ENCODE measurements at regions of chr1 and their contacts with region 1.

Region 1: DNA sequence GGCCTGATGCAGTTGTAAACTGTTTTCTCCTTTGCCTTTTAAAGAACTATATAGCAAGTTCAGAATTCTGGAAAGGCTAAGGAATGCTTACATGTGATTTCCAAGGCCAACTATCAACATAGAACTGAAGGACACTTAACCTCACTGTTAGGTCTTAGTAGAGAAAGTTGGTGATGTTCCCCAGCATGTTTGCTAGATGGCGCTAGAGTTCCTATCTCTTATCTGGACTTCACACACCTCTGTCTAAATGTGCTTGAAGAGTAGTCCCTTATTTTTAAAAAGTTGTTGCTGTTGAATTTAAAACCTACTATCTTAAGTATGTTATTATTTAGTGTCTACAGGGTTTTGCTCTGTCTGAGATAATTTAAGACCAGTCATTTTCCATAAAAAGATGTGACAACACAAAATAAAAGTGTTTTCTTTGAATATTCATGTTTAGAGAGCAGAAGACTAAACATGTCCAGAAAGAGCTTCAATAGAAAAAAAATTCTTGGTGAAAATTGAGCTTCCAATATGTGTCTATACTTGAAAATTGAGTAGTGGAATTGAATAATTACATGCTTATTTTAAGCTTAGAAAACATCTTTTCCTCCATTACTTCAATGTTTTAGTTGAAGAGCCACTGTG is 237.3 kb downstream of the S1PR1 start:
- DNase-seq: no peak
- H3K4me3 ChIP-seq: no peak overlapping the region
- H3K27ac ChIP-seq: no peak overlapping the region
- H3K4me1 ChIP-seq: no peaks in the 10 kb centered on the region
- H3K27me3 ChIP-seq: no peaks in the 10 kb centered on the region
- CTCF ChIP-seq: peak in 2 of 3 experiments; percentile 51 to 85; a peak in 3 of 4 replicates
- EP300 ChIP-seq: no peak
- POLR2A ChIP-seq: no peak
- RAD21 ChIP-seq: peak; percentile 50 to 57

Region 2: GRCh38 chr1:101394041-101394440 is 80.1 kb before region 1 on chr1:
- CTCF ChIA-PET with region 1: no interaction called
- POLR2A ChIA-PET with region 1: no interaction called
- DNase-seq: no peak
- H3K4me3 ChIP-seq: no peak overlapping the region
- H3K27ac ChIP-seq: no peak overlapping the region
- H3K4me1 ChIP-seq: no peaks in the 10 kb centered on the region
- H3K27me3 ChIP-seq: no peaks in the 10 kb centered on the region; a peak in 2 of 7 replicates
- CTCF ChIP-seq: no peak
- EP300 ChIP-seq: no peak
- POLR2A ChIP-seq: no peak
- RAD21 ChIP-seq: no peak

Region 3: GRCh38 chr1:101453844-101454243 is 20.3 kb before region 1 on chr1:
- CTCF ChIA-PET with region 1: interaction called, 16 read pairs
- POLR2A ChIA-PET with region 1: no interaction called
- DNase-seq: no peak
- H3K4me3 ChIP-seq: no peak overlapping the region
- H3K27ac ChIP-seq: no peak overlapping the region
- H3K4me1 ChIP-seq: no peaks in the 10 kb centered on the region
- H3K27me3 ChIP-seq: no peaks in the 10 kb centered on the region
- CTCF ChIP-seq: no peak
- EP300 ChIP-seq: no peak
- POLR2A ChIP-seq: no peak
- RAD21 ChIP-seq: no peak

Region 4: DNA sequence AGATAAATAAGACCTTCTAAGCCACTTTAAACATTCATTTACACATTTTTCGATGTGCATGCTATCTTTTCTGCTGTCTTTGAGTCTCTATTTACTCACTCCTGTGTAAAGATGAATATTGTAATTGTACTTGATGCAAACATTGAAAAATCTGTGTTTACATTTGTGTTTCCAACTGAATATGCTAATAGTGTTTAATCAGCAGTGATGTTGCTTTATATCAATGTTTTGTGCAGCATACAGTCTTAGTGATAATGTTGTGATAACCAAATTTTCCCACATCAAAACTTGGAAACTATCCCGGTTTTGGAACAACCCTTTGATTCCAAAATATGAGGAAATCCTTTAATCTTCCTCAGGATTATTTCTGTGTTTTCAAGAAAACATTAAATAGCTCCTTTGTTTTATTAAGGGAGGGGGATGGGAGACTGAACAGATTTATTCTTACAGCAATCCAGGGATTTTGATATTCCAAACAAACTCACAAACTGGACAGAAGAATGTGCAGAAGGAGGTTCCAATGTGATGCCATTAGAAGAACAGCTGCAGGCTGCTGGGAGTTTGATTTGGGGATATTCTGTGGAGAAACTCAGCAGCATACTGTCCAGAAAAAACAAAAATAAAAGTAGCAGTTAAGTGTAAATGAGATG is 10.7 kb after region 1 on chr1:
- CTCF ChIA-PET with region 1: interaction called, 34 read pairs
- POLR2A ChIA-PET with region 1: no interaction called
- DNase-seq: no peak
- H3K4me3 ChIP-seq: no peak overlapping the region
- H3K27ac ChIP-seq: no peak overlapping the region
- H3K4me1 ChIP-seq: peaks cover 0 to 7% (median 0%) of the 10 kb centered on the region in 4 experiments; a peak in 2 of 7 replicates
- H3K27me3 ChIP-seq: no peaks in the 10 kb centered on the region
- CTCF ChIP-seq: no peak
- EP300 ChIP-seq: no peak
- POLR2A ChIP-seq: no peak
- RAD21 ChIP-seq: no peak

Region 5: GRCh38 chr1:101506541-101507164 is 32.5 kb after region 1 on chr1:
- CTCF ChIA-PET with region 1: interaction called, 19 read pairs
- POLR2A ChIA-PET with region 1: no interaction called
- DNase-seq: peak in 1 of 2 experiments; percentile 48
- H3K4me3 ChIP-seq: no peak overlapping the region
- H3K27ac ChIP-seq: no peak overlapping the region
- H3K4me1 ChIP-seq: no peaks in the 10 kb centered on the region
- H3K27me3 ChIP-seq: no peaks in the 10 kb centered on the region
- CTCF ChIP-seq: peak in 2 of 3 experiments; percentile 39 to 73; a peak in 3 of 4 replicates
- EP300 ChIP-seq: no peak
- POLR2A ChIP-seq: no peak
- RAD21 ChIP-seq: peak; percentile 47 to 50

Region 6: GRCh38 chr1:101520302-101520701 is 46.1 kb after region 1 on chr1:
- CTCF ChIA-PET with region 1: interaction called, 13 read pairs
- POLR2A ChIA-PET with region 1: no interaction called
- DNase-seq: peak; percentile 15 to 45
- H3K4me3 ChIP-seq: no peak overlapping the region
- H3K27ac ChIP-seq: no peak overlapping the region
- H3K4me1 ChIP-seq: no peaks in the 10 kb centered on the region
- H3K27me3 ChIP-seq: peaks cover 0 to 1% (median 0%) of the 10 kb centered on the region in 4 experiments; a peak in 1 of 7 replicates
- CTCF ChIP-seq: peak in 2 of 3 experiments; percentile 67 to 82; a peak in 3 of 4 replicates
- EP300 ChIP-seq: no peak
- POLR2A ChIP-seq: no peak
- RAD21 ChIP-seq: peak; percentile 90 to 91

Region 7: GRCh38 chr1:101532377-101532776 is 58.2 kb after region 1 on chr1:
- CTCF ChIA-PET with region 1: no interaction called
- POLR2A ChIA-PET with region 1: no interaction called
- DNase-seq: no peak
- H3K4me3 ChIP-seq: no peak overlapping the region
- H3K27ac ChIP-seq: no peak overlapping the region
- H3K4me1 ChIP-seq: no peaks in the 10 kb centered on the region
- H3K27me3 ChIP-seq: no peaks in the 10 kb centered on the region
- CTCF ChIP-seq: no peak
- EP300 ChIP-seq: no peak
- POLR2A ChIP-seq: no peak
- RAD21 ChIP-seq: no peak

Region 8: DNA sequence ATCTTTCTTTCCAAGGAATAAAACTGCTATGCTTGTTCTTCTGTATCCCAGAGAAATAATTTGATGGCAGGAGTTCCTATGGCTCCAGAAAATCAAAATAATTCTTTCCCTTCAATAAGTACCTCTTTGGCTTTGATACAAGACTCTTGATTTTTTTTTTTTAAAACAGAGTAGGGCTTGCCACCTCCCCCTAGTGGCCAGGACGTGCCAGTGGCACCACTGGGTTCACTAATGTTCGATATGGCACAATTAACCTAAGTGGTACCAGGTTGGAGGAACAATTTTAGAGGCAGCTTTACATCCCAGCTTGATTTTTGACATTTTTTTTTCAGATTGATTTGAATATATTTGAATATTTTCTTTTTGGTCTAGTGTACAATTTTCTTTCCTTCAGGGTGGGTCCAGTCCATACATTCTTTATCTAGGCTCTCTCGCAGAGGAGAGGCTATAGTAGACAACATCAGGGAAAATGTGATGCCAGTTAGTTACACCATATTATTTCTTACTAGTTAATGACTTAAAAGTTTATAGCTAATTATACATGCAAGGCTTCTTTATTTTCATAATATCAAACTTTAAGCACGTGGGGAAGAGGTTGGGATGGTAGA is 93.5 kb after region 1 on chr1:
- CTCF ChIA-PET with region 1: interaction called, 11 read pairs
- POLR2A ChIA-PET with region 1: no interaction called
- DNase-seq: peak in 1 of 2 experiments; percentile 50
- H3K4me3 ChIP-seq: no peak overlapping the region
- H3K27ac ChIP-seq: no peak overlapping the region
- H3K4me1 ChIP-seq: no peaks in the 10 kb centered on the region
- H3K27me3 ChIP-seq: no peaks in the 10 kb centered on the region
- CTCF ChIP-seq: peak; percentile 67 to 85 (median 77)
- EP300 ChIP-seq: no peak
- POLR2A ChIP-seq: no peak
- RAD21 ChIP-seq: peak; percentile 45 to 58